K562 (cell line): ENCODE measurements at regions of chr18 and their contacts with region 1.

Region 1: DNA sequence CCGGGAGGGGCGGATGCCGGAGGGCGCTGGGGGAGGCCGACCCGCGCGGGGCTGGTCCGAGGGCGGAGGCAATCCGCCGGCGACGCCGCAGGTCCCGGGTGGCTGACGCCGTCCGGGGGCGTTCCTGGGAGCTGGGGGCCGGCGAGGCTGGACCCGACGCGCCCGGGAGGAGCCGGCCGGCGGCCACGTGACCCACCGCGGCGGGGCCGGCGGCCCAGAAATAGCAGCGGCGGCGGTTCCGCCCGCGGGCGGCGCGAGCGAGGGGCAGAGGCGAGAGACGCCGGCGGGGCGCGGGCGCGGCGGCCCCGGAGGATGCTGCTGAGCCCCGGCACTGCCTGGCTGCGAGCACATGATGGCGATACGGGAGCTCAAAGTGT is at the start of gene RAB31:
- DNase-seq: peak; percentile 87 to 98 (median 94)
- ATAC-seq: peak; percentile 86
- H3K4me3 ChIP-seq: peak within 1 kb of the TSS; percentile 76
- H3K27ac ChIP-seq: peak within 1 kb of the TSS; percentile 75
- H3K4me1 ChIP-seq: peaks cover 47 to 65% of the 10 kb centered on the region in 2 experiments
- H3K27me3 ChIP-seq: no peaks in the 10 kb centered on the region
- CTCF ChIP-seq: 0 out of 6 replicates have a peak, but pooled peaks of 1 of the 3 experiments have one; percentile 14
- EP300 ChIP-seq: no peak
- POLR2A ChIP-seq: no peak; the same call in 1 of the 2 replicates
- RAD21 ChIP-seq: peak in 1 of 2 experiments; percentile 19; a peak in 2 of 4 replicates
- polyA plus RNA-seq, gene RAB31: 20.7 to 25.6 TPM

Region 2: DNA sequence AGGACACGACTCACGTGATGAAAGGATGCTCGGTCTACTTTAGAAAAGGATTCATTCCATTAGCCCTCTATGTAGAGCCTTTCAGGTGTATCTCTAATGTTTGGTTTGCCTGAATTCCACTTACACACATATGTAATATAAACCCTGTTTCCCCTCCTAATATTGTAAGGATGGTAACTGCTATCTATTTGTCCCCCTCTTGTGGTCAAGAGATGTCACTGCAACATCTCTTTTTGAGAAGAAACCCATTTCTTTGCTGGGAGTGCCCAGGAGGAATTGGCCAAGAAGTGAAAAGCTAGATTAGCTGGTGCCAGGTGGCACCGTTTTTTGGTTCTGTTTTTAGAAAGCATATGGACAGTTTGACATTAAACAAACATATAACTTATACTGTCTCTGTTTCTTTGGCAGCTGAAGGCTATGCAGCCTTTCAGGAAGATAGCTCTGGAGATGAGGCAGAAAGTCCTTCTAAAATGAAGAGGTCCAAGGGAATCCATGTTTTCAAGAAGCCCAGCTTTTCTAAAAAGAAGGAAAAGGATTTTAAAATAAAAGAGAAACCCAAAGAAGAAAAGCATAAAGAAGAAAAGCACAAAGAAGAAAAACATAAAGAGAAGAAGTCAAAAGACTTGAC is 191.5 kb before region 1 on chr18:
- CTCF ChIA-PET with region 1: no interaction called
- POLR2A ChIA-PET with region 1: no interaction called
- in situ Hi-C with region 1: no loop called
- intact Hi-C with region 1: no loop called
- DNase-seq: peak; percentile 47 to 57 (median 54)
- ATAC-seq: peak; percentile 86
- H3K4me3 ChIP-seq: no peak overlapping the region
- H3K27ac ChIP-seq: no peak overlapping the region
- H3K4me1 ChIP-seq: no peaks in the 10 kb centered on the region
- H3K27me3 ChIP-seq: no peaks in the 10 kb centered on the region
- CTCF ChIP-seq: peak; percentile 63 to 92 (median 89); a peak in 5 of 6 replicates
- EP300 ChIP-seq: no peak
- POLR2A ChIP-seq: no peak
- RAD21 ChIP-seq: peak; percentile 73 to 96

Region 3: GRCh38 chr18:10525371-10526210 is 817.5 kb after region 1 on chr18 and contains the start of gene NAPG:
- CTCF ChIA-PET with region 1: no interaction called
- POLR2A ChIA-PET with region 1: no interaction called
- in situ Hi-C with region 1: no loop called
- intact Hi-C with region 1: loop called (anchors 10 kb)
- DNase-seq: peak; percentile 97 to 99 (median 98)
- ATAC-seq: peak; percentile 83
- H3K4me3 ChIP-seq: peak within 1 kb of the TSS; percentile 77
- H3K27ac ChIP-seq: peak within 1 kb of the TSS; percentile 74
- H3K4me1 ChIP-seq: peaks cover 9 to 30% of the 10 kb centered on the region in 2 experiments
- H3K27me3 ChIP-seq: no peaks in the 10 kb centered on the region
- CTCF ChIP-seq: peak in 1 of 3 experiments; percentile 13; a peak in 1 of 6 replicates
- EP300 ChIP-seq: no peak
- POLR2A ChIP-seq: peak; percentile 84
- RAD21 ChIP-seq: no peak
- polyA plus RNA-seq, gene NAPG: 50.9 to 52.4 TPM